ENCODE measurements at regions of chr11 and their contacts with region 1.

Region 1: DNA sequence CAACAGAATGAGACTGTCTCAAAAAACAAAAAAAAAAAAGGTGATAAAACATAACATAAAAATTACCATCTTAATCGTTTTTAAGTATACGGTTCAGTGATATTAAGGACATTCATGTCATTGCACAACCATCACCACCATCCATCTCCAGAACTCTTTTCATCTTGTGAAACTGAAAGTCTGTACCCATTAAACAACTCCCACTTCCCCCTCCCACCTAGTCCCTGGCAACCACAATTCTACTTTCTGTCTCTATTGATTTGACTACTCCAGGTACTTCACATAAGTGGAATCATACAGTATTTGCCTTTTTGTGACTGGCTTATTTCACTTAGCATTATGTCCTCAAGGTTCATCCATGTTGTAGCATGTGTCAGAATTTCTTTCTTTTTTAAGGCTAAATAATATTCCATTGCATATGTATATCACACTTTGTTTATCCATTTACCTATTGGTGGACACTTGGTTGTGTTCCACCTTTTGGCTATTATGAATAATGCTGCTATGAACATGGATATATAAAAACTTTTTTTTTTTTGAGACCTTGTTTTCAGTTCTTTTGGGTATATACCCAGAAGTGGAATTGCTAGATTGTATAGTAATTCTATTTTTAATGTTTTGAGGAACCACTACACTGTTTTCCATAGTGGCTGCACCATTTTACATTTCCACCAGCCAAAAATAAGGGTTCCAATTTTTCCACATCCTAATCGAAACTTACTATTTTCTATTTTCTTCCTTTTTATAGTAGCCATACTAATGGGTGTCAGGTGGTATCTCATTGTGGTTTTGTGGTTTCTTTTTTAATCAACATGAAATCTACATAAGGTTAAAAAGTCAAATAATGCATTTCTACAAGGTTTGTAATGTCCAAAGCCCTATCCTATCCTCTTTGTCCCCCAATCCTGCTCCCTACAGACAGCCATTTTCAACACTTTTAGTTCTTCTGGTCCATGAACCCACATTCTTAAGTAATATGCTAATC is 23.4 kb upstream of the PIK3C2A start:
- DNase-seq: peak; percentile 67
- ATAC-seq: peak; percentile 94
- H3K4me3 Mint-ChIP-seq: no peak overlapping the region
- H3K27ac Mint-ChIP-seq: no peak overlapping the region
- H3K4me1 Mint-ChIP-seq: peaks cover 16% of the 10 kb centered on the region
- H3K27me3 Mint-ChIP-seq: peaks cover 8% of the 10 kb centered on the region

Region 2: GRCh38 chr11:17116121-17116520 is 115.0 kb before region 1 on chr11:
- CTCF ChIA-PET with region 1: no interaction called
- POLR2A ChIA-PET with region 1: no interaction called
- intact Hi-C with region 1: no loop called
- DNase-seq: no peak
- ATAC-seq: no peak
- H3K4me3 Mint-ChIP-seq: no peak overlapping the region
- H3K27ac Mint-ChIP-seq: no peak overlapping the region
- H3K4me1 Mint-ChIP-seq: no peaks in the 10 kb centered on the region
- H3K27me3 Mint-ChIP-seq: no peaks in the 10 kb centered on the region

Region 3: GRCh38 chr11:17214338-17214737 is 16.8 kb before region 1 on chr11:
- CTCF ChIA-PET with region 1: interaction called, 13 read pairs
- POLR2A ChIA-PET with region 1: no interaction called
- intact Hi-C with region 1: loop called in 1 of 2 experiments (anchors 2 kb)
- DNase-seq: no peak
- ATAC-seq: no peak
- H3K4me3 Mint-ChIP-seq: no peak overlapping the region
- H3K27ac Mint-ChIP-seq: no peak overlapping the region
- H3K4me1 Mint-ChIP-seq: peaks cover 8% of the 10 kb centered on the region
- H3K27me3 Mint-ChIP-seq: peaks cover 6% of the 10 kb centered on the region

Region 4: DNA sequence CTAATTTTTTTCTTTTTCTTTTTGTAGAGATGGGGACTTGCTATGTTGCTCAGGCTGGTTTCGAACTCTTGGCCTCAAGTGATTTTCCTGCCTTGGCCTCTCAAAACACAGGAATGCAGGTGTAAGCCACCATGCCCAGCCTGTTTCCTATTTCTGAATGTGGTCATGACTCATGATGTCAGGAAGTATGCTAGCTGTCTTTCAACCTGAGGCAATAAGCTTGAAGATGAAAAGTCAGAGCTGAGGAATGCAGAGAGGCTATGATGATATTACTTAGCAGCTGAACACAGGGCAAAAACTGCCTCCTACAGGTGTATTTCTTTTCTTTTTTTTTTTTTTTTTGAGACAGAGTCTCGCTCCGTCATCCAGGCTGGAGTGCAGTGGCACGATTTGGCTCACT is 36.4 kb after region 1 on chr11:
- CTCF ChIA-PET with region 1: interaction called, 12 read pairs
- POLR2A ChIA-PET with region 1: no interaction called
- intact Hi-C with region 1: no loop called
- DNase-seq: peak; percentile 32
- ATAC-seq: peak; percentile 91
- H3K4me3 Mint-ChIP-seq: no peak overlapping the region
- H3K27ac Mint-ChIP-seq: no peak overlapping the region
- H3K4me1 Mint-ChIP-seq: peaks cover 14% of the 10 kb centered on the region
- H3K27me3 Mint-ChIP-seq: peaks cover 6% of the 10 kb centered on the region

Region 5: GRCh38 chr11:17298302-17298701 is 67.1 kb after region 1 on chr11:
- CTCF ChIA-PET with region 1: interaction called, 11 read pairs
- POLR2A ChIA-PET with region 1: interaction called, 3 read pairs
- intact Hi-C with region 1: loop called (anchors 1 kb)
- DNase-seq: peak; percentile 83
- ATAC-seq: peak; percentile 82
- H3K4me3 Mint-ChIP-seq: no peak overlapping the region
- H3K27ac Mint-ChIP-seq: no peak overlapping the region
- H3K4me1 Mint-ChIP-seq: peaks cover 40% of the 10 kb centered on the region
- H3K27me3 Mint-ChIP-seq: no peaks in the 10 kb centered on the region

Region 6: GRCh38 chr11:17389211-17389956 is 158.2 kb after region 1 on chr11:
- CTCF ChIA-PET with region 1: interaction called, 25 read pairs
- POLR2A ChIA-PET with region 1: no interaction called
- intact Hi-C with region 1: loop called (anchors 1 kb)
- DNase-seq: peak; percentile 86
- ATAC-seq: peak; percentile 82
- H3K4me3 Mint-ChIP-seq: peak overlapping the region; percentile 66
- H3K27ac Mint-ChIP-seq: no peak overlapping the region
- H3K4me1 Mint-ChIP-seq: peaks cover 3% of the 10 kb centered on the region
- H3K27me3 Mint-ChIP-seq: peaks cover 8% of the 10 kb centered on the region

Region 7: DNA sequence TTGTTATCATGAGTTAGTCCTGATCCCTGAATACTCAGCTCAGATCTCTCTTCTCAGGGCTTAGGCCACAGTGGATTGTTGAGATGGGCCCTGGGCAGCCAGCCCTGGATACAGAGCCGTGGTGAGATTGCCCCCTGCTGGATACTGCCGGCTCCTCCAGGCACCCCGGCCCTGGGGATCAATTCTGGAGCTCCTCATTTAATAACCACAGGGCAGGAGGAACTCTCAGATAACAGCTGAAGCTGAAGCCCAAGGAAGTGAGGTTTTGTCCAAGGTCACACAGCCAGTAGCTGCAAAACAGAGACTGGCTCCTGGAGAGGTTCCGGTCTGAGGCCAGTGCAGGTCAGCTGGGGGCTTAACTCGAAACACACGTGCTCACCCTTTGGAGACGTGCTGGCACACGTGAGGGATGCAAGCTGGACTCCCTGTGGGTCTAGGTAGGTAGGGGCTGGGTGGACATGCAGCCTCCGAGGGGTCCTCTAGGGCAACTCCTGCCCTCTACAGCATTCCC is 297.1 kb after region 1 on chr11:
- CTCF ChIA-PET with region 1: interaction called, 4 read pairs
- POLR2A ChIA-PET with region 1: no interaction called
- intact Hi-C with region 1: loop called (anchors 1 kb)
- DNase-seq: peak; percentile 76
- ATAC-seq: peak; percentile 91
- H3K4me3 Mint-ChIP-seq: no peak overlapping the region
- H3K27ac Mint-ChIP-seq: no peak overlapping the region
- H3K4me1 Mint-ChIP-seq: no peaks in the 10 kb centered on the region
- H3K27me3 Mint-ChIP-seq: peaks cover 2% of the 10 kb centered on the region